Activated CD4-positive, alpha-beta memory T cell treated with anti-CD3 and anti-CD28 coated beads for 36 hours (primary cell): ENCODE measurements at regions of chr7 and their contacts with region 1.

Region 1: DNA sequence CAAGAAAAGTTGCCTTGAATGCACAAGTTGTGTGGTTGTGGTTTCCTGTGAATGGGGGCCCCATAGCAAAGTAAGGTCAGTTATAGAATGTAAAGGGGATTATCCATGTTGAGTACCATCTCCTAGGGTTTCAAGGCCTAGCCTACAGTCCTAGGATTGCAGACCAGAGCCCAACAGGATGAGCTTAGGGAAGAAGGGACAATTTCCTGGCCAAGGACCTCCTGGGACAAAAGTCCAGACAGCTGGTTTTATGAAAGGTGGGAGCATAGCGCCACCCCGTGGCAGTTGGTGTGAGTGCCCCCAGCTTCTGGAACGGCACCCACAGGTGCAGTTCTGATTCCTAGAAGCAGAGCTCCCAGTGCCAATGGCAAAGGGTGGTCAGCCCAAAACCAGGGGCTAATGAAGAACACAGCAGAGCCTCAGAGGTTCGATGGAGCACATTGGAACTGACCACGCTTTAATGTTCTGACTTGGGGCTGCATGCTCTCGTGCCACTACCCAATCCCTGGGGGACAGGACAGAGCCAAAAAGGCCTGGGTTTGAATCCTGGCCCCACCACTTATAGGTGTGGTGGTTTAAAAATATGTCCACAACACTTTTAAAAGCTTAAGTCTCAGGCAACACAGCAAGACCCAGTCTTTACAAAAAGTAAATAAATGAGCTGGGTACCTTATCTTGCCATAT is 25.8 kb upstream of the TMEM120A start:
- DNase-seq: peak; percentile 81
- H3K4me3 Mint-ChIP-seq: no peak overlapping the region
- H3K27ac Mint-ChIP-seq: no peak overlapping the region
- H3K4me1 Mint-ChIP-seq: peaks cover 11% of the 10 kb centered on the region
- H3K27me3 Mint-ChIP-seq: no peaks in the 10 kb centered on the region

Region 2: DNA sequence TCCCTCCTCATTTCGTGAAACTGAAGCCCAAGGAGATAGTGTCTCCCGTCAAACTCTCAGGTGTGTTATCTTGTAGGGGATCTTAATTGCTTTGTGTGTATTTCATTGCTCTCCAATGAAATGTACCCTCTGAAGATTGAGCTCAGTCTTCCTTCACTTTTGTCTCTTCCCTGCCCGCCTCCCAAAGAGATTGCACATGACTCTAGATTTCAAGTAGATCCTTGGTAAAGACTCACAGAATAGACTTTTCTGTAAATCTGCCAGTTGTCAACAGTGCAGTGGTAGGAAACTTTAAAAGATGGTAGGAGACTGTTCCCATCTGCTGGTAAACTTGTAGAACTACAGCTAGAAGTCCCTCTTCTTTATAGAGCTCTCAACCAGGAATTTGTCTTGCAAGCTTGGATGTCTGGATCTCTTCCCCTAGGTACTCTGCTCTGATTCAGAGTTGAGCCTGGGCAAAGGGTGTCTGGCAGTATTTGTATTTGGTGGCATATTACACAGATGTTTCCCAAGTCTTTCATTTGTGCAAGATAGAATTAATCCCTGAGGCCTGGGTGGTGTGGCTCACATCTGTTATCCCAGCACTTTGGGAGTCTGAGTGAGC is 257.8 kb before region 1 on chr7:
- CTCF ChIA-PET with region 1: interaction called, 14 read pairs
- POLR2A ChIA-PET with region 1: no interaction called
- intact Hi-C with region 1: no loop called
- DNase-seq: no peak
- H3K4me3 Mint-ChIP-seq: no peak overlapping the region
- H3K27ac Mint-ChIP-seq: no peak overlapping the region
- H3K4me1 Mint-ChIP-seq: peaks cover 2% of the 10 kb centered on the region
- H3K27me3 Mint-ChIP-seq: no peaks in the 10 kb centered on the region

Region 3: GRCh38 chr7:75866489-75867389 is 153.4 kb before region 1 on chr7:
- CTCF ChIA-PET with region 1: interaction called, 153 read pairs
- POLR2A ChIA-PET with region 1: no interaction called
- intact Hi-C with region 1: loop called (anchors 1 kb)
- DNase-seq: peak; percentile 64
- H3K4me3 Mint-ChIP-seq: no peak overlapping the region
- H3K27ac Mint-ChIP-seq: no peak overlapping the region
- H3K4me1 Mint-ChIP-seq: peaks cover 22% of the 10 kb centered on the region
- H3K27me3 Mint-ChIP-seq: peaks cover 8% of the 10 kb centered on the region

Region 4: GRCh38 chr7:75994388-75995051 is 25.7 kb before region 1 on chr7 and contains the start of gene TMEM120A:
- CTCF ChIA-PET with region 1: interaction called, 12 read pairs
- POLR2A ChIA-PET with region 1: no interaction called
- intact Hi-C with region 1: no loop called
- DNase-seq: peak; percentile 95
- H3K4me3 Mint-ChIP-seq: peak within 1 kb of the TSS; percentile 64
- H3K27ac Mint-ChIP-seq: no peak within 1 kb of the TSS
- H3K4me1 Mint-ChIP-seq: peaks cover 31% of the 10 kb centered on the region
- H3K27me3 Mint-ChIP-seq: no peaks in the 10 kb centered on the region
- total RNA-seq, gene TMEM120A: 24.2 to 25.8 TPM

Region 5: DNA sequence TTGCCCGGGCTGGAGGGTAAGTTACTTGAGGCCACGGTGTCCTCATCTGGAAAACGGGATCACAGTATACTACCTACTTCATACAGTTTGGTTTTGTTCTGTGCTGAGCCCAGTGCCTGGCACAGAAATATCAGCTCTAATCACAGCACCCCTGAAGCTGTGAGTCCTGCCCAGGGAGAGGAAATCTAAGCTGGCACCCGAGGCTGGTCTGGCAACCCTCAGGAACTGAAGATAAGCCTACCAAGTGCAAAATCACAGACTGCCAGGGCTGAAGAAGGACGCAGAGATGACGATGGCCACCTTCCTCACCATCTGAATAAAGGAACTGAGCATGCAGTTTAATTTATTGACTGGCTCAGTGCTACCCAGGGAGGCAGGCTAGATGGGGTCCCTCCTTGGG is 18.0 kb before region 1 on chr7:
- CTCF ChIA-PET with region 1: interaction called, 15 read pairs
- POLR2A ChIA-PET with region 1: no interaction called
- intact Hi-C with region 1: no loop called
- DNase-seq: no peak
- H3K4me3 Mint-ChIP-seq: no peak overlapping the region
- H3K27ac Mint-ChIP-seq: no peak overlapping the region
- H3K4me1 Mint-ChIP-seq: peaks cover 9% of the 10 kb centered on the region
- H3K27me3 Mint-ChIP-seq: no peaks in the 10 kb centered on the region